Ascending aorta (tissue), 2 donors: ENCODE measurements at regions of chr9 and their contacts with region 1.

Region 1: GRCh38 chr9:125746017-125746773 is 978 bp upstream of the PBX3 start:
- DNase-seq: peak; percentile 82 to 97
- H3K4me3 ChIP-seq: peak overlapping the region; percentile 65 to 88
- H3K27ac ChIP-seq: peak overlapping the region; percentile 79 to 93
- H3K4me1 ChIP-seq: no peaks in the 10 kb centered on the region
- H3K27me3 ChIP-seq: no peaks in the 10 kb centered on the region
- CTCF ChIP-seq: no peak

Region 2: GRCh38 chr9:124868511-124869465 is 877.4 kb before region 1 on chr9:
- intact Hi-C with region 1: loop called (anchors 5 kb)
- DNase-seq: peak; percentile 30 to 92
- H3K4me3 ChIP-seq: peak overlapping the region; percentile 63 to 84
- H3K27ac ChIP-seq: peak overlapping the region; percentile 89 to 96
- H3K4me1 ChIP-seq: peaks cover 8 to 31% of the 10 kb centered on the region in 2 donors
- H3K27me3 ChIP-seq: no peaks in the 10 kb centered on the region
- CTCF ChIP-seq: no peak

Region 3: GRCh38 chr9:125706661-125707471 is 39.3 kb before region 1 on chr9 and contains the start of gene MAPKAP1:
- intact Hi-C with region 1: loop called (anchors 1 kb)
- DNase-seq: peak; percentile 83 to 98
- H3K4me3 ChIP-seq: peak within 1 kb of the TSS; percentile 85 to 90
- H3K27ac ChIP-seq: peak within 1 kb of the TSS; percentile 64 to 66
- H3K4me1 ChIP-seq: peaks cover 0 to 12% of the 10 kb centered on the region in 2 donors
- H3K27me3 ChIP-seq: no peaks in the 10 kb centered on the region
- CTCF ChIP-seq: no peak
- total RNA-seq, gene MAPKAP1: 49.6 TPM

Region 4: GRCh38 chr9:125785248-125785751 is 39.1 kb after region 1 on chr9:
- intact Hi-C with region 1: no loop called
- DNase-seq: no peak
- H3K4me3 ChIP-seq: no peak overlapping the region
- H3K27ac ChIP-seq: peak overlapping the region; percentile 13 to 18
- H3K4me1 ChIP-seq: peaks cover 0 to 6% of the 10 kb centered on the region in 2 donors
- H3K27me3 ChIP-seq: no peaks in the 10 kb centered on the region
- CTCF ChIP-seq: no peak

Region 5: GRCh38 chr9:127021664-127022363 is 1275.6 kb after region 1 on chr9:
- intact Hi-C with region 1: no loop called
- DNase-seq: peak; percentile 69 to 93
- H3K4me3 ChIP-seq: no peak overlapping the region
- H3K27ac ChIP-seq: peak overlapping the region; percentile 69 to 73
- H3K4me1 ChIP-seq: peaks cover 3 to 13% of the 10 kb centered on the region in 2 donors
- H3K27me3 ChIP-seq: no peaks in the 10 kb centered on the region
- CTCF ChIP-seq: no peak